Endothelial cell of umbilical vein (primary cell): ENCODE measurements at regions of chr3 and their contacts with region 1.

Region 1: DNA sequence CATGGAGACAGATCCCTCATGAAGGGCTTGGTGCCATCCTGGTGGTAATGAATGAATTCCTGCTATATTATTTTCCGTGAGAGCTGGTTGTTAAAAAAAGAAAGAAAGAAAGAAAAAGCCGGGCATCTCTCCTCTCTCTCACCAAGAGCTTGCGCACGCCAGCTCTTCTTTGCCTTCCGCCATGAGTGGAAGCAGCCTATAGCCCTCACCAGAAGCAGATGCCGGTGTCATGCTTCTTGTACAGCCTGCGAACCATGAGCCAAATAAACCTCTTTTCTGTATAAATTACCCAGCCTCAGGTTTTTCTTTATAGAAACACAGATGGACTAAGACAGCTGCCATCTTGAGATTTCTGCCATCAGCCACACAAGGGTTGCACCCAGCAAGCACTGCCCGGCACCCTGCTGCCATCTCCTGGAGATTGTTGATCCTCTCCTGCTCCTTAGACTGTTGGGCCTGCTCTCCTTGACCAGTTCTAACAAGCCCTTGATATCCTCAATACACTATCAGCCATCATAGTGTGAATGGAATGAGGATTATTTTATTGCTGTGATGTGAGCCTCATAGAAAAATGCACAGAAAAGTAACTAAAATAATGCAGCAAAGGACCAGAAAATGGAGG is 3.5 kb upstream of the AHSG start:
- DNase-seq: no peak
- H3K4me3 ChIP-seq: no peak overlapping the region
- H3K27ac ChIP-seq: no peak overlapping the region
- H3K4me1 ChIP-seq: peaks cover 1% of the 10 kb centered on the region
- H3K27me3 ChIP-seq: peaks cover 3 to 5% of the 10 kb centered on the region in 2 experiments
- CTCF ChIP-seq: no peak
- POLR2A ChIP-seq: no peak

Region 2: DNA sequence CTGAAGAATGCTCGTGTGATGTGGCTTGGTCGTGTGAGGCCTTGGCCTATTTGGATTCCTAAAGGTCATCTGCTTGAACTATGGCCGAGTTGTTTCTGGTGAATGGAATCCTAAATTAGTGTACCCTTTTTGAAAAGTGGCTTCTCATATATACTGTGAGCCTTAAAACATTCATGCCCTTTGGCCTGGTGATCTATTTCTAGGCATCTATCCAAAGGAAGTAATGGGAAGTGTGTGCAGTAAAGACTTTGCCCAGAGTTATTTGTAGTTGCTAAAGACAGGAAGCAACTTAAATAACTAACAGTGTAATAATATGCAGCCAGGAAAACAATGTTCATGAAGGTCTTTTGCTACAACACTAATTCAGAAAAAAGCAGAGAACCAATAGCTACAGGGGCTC is 250.3 kb before region 1 on chr3:
- CTCF ChIA-PET with region 1: no interaction called
- POLR2A ChIA-PET with region 1: no interaction called
- dilution Hi-C with region 1: no loop called
- intact Hi-C with region 1: no loop called
- DNase-seq: peak; percentile 36
- H3K4me3 ChIP-seq: no peak overlapping the region
- H3K27ac ChIP-seq: no peak overlapping the region
- H3K4me1 ChIP-seq: no peaks in the 10 kb centered on the region
- H3K27me3 ChIP-seq: peaks cover 27 to 37% of the 10 kb centered on the region in 2 experiments
- CTCF ChIP-seq: no peak
- POLR2A ChIP-seq: no peak

Region 3: GRCh38 chr3:186598108-186598784 is 11.1 kb before region 1 on chr3:
- CTCF ChIA-PET with region 1: interaction called, 11 read pairs
- POLR2A ChIA-PET with region 1: no interaction called
- dilution Hi-C with region 1: no loop called
- intact Hi-C with region 1: no loop called
- DNase-seq: no peak
- H3K4me3 ChIP-seq: no peak overlapping the region
- H3K27ac ChIP-seq: no peak overlapping the region
- H3K4me1 ChIP-seq: no peaks in the 10 kb centered on the region
- H3K27me3 ChIP-seq: peaks cover 0 to 4% of the 10 kb centered on the region in 2 experiments
- CTCF ChIP-seq: no peak
- POLR2A ChIP-seq: no peak